Heart left ventricle (tissue), 16 donors: ENCODE measurements at regions of chr5 and their contacts with region 1.

Region 1: GRCh38 chr5:81922854-81923279 is 49.0 kb upstream of the ATG10 start:
- DNase-seq: no peak
- ATAC-seq: no peak
- H3K4me3 ChIP-seq: no peak overlapping the region
- H3K27ac ChIP-seq: no peak overlapping the region
- H3K4me1 ChIP-seq: peaks cover 0 to 8% (median 0%) of the 10 kb centered on the region in 12 donors
- H3K27me3 ChIP-seq: no peaks in the 10 kb centered on the region
- CTCF ChIP-seq: no peak
- POLR2A ChIP-seq: no peak

Region 2: DNA sequence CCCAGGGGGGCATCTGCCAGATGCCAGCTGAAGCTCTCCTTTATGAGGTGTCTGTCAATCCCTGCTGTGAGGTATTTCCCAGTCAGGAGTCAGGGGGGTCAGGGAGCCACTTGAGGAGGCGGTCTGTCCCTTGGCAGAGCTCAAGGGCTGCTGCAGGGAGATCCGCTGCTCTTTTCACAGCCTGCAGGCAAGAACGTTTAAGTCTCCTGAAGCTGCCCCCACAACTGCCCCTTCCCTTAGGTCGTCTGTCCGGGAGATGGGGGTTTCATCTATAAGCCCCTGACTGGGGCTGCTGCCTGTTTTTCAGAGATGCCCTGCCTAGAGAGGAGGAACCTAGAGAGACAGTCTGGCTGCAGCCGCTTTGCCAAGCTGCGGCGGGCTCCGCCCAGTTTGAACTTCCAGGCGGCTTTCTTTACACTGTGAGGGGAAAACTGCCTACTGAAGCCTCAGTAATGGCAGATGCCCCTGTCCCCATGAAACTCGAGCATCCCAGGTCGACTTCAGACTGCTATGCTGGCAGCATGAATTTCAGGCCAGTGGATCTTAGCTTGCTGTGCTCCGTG is 206.9 kb after region 1 on chr5:
- intact Hi-C with region 1: loop called in 1 of 10 experiments (anchors 10 kb)
- DNase-seq: no peak
- ATAC-seq: no peak
- H3K4me3 ChIP-seq: no peak overlapping the region
- H3K27ac ChIP-seq: no peak overlapping the region
- H3K4me1 ChIP-seq: no peaks in the 10 kb centered on the region
- H3K27me3 ChIP-seq: no peaks in the 10 kb centered on the region
- CTCF ChIP-seq: no peak
- POLR2A ChIP-seq: no peak